HEK293 (cell line): ENCODE measurements at regions of chr4 and their contacts with region 1.

Region 1: GRCh38 chr4:74623041-74623440 is 171.3 kb downstream of the BTC start:
- H3K4me3 ChIP-seq: no peak overlapping the region
- H3K27ac ChIP-seq: no peak overlapping the region
- H3K4me1 ChIP-seq: 0 out of 2 replicates have a peak, but pooled peaks cover 3% of the 10 kb centered on the region
- CTCF ChIP-seq: no peak

Region 2: DNA sequence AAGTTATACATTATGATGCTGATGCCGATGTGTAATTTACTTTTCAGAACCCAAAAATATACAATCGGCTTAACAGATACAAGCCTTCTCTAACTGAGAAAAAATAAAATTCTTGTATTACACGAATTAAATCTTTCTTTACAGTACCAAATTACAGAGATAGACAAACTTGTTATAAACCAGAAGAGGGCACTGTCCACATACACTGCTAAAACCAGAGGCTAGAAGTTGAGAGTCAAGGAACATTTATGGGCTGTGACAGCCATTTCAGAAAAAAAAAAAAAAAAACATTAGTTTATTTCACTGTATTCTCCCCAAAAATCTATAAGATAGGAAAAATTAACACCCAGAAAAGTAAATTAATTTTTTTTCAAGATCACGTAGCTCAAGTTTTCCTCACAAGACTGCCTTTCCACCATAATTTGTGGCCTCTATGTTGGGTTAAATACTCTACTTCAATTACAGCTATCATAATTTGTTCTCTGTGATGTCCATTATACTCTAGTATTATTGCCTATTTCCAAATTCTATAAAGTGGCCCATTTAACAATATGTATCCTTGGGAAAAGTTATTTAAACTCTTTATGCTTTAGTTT is 246.1 kb before region 1 on chr4:
- CTCF ChIA-PET with region 1: interaction called, 12 read pairs
- POLR2A ChIA-PET with region 1: no interaction called
- H3K4me3 ChIP-seq: no peak overlapping the region
- H3K27ac ChIP-seq: no peak overlapping the region
- H3K4me1 ChIP-seq: no peaks in the 10 kb centered on the region
- CTCF ChIP-seq: no peak

Region 3: DNA sequence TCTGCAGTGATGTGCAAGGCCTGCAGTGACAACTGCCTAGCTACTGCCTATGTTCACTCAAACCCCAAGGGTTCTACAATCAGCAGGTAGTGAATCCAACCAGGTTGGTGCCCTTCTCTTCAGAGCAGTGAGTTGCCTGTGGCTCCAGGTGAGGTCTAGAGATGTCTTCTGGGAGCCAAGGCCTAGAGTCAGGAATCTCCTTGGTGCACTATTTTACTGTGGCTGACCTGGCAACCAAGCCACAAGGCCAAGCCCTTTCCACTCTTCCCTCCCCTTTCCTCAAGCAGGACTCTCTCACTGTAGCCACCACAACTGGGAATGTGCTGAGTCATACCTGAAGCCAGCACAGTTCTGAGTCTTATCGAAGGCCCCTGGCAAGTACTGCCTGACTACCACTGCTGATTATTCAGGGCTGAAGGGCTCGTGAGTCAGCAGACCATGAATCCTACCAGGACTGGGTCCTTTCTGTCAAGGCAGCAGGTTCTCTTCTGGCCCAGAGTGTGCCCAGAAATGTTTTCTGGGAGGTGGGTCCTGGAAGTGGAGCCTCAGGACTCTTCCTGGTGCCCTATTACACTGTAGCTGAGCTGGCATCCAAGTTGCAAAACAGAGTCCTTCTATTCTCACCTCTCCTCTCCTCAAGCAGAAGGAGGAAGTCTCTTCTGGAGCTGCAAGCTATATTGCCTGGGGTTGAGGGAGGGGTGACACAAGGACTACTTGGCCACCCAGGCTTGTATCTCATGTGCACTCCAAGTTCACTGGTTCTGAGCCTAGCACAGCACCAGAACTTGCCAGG is 59.7 kb after region 1 on chr4:
- CTCF ChIA-PET with region 1: no interaction called
- POLR2A ChIA-PET with region 1: no interaction called
- H3K4me3 ChIP-seq: no peak overlapping the region
- H3K27ac ChIP-seq: no peak overlapping the region
- H3K4me1 ChIP-seq: no peaks in the 10 kb centered on the region
- CTCF ChIP-seq: no peak

Region 4: DNA sequence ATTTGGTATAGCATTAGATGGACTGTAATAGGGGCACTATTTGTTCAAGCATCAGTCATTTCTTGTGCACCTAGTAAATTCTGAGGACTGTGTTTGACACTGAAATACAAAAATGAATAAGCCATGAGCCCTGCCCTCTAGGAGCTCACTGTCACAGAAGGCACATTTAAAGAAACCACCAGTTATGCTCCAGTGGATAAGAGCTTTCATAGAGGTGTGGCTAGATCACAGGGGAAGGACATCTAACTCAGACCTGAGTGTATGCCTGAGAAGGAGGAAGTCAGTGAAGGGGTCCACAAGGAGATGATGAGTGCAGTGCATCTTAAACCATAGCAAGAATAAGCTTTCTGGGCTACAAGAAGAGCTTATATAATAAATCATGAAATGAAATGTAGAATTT is 131.2 kb after region 1 on chr4:
- CTCF ChIA-PET with region 1: no interaction called
- POLR2A ChIA-PET with region 1: no interaction called
- H3K4me3 ChIP-seq: no peak overlapping the region
- H3K27ac ChIP-seq: no peak overlapping the region
- H3K4me1 ChIP-seq: no peaks in the 10 kb centered on the region
- CTCF ChIP-seq: no peak

Region 5: GRCh38 chr4:74845834-74846233 is 222.8 kb after region 1 on chr4:
- CTCF ChIA-PET with region 1: no interaction called
- POLR2A ChIA-PET with region 1: no interaction called
- H3K4me3 ChIP-seq: no peak overlapping the region
- H3K27ac ChIP-seq: no peak overlapping the region
- H3K4me1 ChIP-seq: no peaks in the 10 kb centered on the region
- CTCF ChIP-seq: no peak